Panc1 (cell line): ENCODE measurements at regions of chr7 and their contacts with region 1.

Region 1: GRCh38 chr7:150988230-150989226 is 2.3 kb upstream of the NOS3 start:
- DNase-seq: no peak
- ATAC-seq: peak; percentile 58
- H3K4me3 ChIP-seq: no peak overlapping the region
- H3K27ac ChIP-seq: no peak overlapping the region
- H3K4me1 ChIP-seq: no peaks in the 10 kb centered on the region
- H3K27me3 ChIP-seq: no peaks in the 10 kb centered on the region
- CTCF ChIP-seq: peak; percentile 90

Region 2: GRCh38 chr7:150778738-150779301 is 209.7 kb before region 1 on chr7:
- CTCF ChIA-PET with region 1: no interaction called
- POLR2A ChIA-PET with region 1: no interaction called
- in situ Hi-C with region 1: no loop called
- intact Hi-C with region 1: loop called (anchors 5 kb)
- DNase-seq: peak; percentile 55
- ATAC-seq: peak; percentile 99
- H3K4me3 ChIP-seq: no peak overlapping the region
- H3K27ac ChIP-seq: no peak overlapping the region
- H3K4me1 ChIP-seq: peaks cover 3% of the 10 kb centered on the region; the same call in 1 of the 2 replicates
- H3K27me3 ChIP-seq: no peaks in the 10 kb centered on the region; the same call in none of the 2 replicates
- CTCF ChIP-seq: peak; percentile 94

Region 3: DNA sequence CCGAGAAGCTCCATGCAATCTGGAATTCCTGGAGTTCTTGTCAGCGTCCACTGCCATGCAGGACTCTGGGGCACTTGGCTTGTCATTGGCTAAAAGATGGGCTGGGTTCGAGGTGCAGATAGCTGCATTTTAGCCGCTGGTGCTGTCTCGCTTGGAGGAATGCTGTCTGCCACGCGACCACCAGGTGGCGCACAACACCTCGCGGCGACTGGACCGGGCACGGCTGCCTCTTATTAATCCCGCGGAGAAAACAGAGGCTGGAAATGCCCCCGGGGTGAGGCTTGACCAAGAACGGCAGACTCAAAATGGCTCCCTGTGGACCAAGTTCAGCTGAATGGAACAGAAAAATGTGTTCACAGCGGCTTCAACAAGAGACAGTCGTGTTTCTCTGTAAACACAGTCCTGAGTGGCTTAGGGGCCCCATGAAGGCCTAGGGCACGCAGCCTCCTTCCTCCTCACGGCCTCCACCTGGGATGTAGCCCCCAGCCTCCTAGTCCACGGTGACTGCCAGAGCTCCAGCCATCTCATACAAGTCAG is 90.0 kb before region 1 on chr7:
- CTCF ChIA-PET with region 1: interaction called, 3 read pairs
- POLR2A ChIA-PET with region 1: no interaction called
- in situ Hi-C with region 1: no loop called
- intact Hi-C with region 1: loop called (anchors 2 kb)
- DNase-seq: peak; percentile 39
- ATAC-seq: peak; percentile 90
- H3K4me3 ChIP-seq: no peak overlapping the region
- H3K27ac ChIP-seq: no peak overlapping the region
- H3K4me1 ChIP-seq: peaks cover 8% of the 10 kb centered on the region; the same call in 1 of the 2 replicates
- H3K27me3 ChIP-seq: no peaks in the 10 kb centered on the region
- CTCF ChIP-seq: peak; percentile 97

Region 4: GRCh38 chr7:150962553-150963399 is 25.8 kb before region 1 on chr7:
- CTCF ChIA-PET with region 1: interaction called, 11 read pairs
- POLR2A ChIA-PET with region 1: no interaction called
- in situ Hi-C with region 1: no loop called
- intact Hi-C with region 1: no loop called
- DNase-seq: no peak
- ATAC-seq: peak; percentile 92
- H3K4me3 ChIP-seq: no peak overlapping the region
- H3K27ac ChIP-seq: no peak overlapping the region
- H3K4me1 ChIP-seq: peaks cover 3% of the 10 kb centered on the region
- H3K27me3 ChIP-seq: no peaks in the 10 kb centered on the region
- CTCF ChIP-seq: peak; percentile 98

Region 5: DNA sequence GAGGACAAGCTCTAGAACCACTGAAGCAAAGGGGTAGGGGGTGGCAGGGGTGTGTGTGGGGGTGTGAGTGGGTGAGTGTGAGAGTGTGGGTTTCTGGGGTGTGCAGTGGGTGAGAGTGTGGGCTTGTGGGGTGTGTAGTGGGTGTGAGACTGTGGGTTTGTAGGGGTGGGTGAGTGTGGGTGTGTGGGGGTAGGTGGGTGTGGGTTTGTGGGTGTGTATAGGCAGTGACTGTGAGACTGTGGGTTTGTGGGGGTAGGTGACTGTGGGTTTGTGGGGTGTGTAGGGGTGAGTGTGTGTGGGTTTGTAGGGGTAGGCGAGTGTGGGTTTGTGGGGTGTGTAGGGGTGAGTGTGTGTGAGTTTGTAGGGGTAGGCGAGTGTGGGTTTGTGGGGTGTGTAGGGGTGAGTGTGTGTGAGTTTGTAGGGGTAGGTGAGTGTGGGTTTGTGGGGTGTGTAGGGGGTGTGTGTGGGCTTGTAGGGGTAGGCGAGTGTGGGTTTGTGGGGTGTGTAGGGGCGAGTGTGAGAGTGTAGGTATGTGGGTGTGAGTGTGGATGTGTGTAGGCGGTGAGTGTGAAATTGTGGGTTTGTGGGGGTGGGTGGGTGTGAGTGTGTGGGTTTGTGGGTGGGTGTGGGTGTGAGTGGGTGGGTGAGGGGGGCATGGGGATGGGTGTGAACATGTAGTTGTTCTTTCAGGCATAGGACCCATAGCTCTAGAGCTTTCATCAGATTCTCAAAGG is 11.1 kb after region 1 on chr7:
- CTCF ChIA-PET with region 1: interaction called, 11 read pairs
- POLR2A ChIA-PET with region 1: no interaction called
- in situ Hi-C with region 1: no loop called
- intact Hi-C with region 1: no loop called
- DNase-seq: no peak
- ATAC-seq: no peak
- H3K4me3 ChIP-seq: no peak overlapping the region
- H3K27ac ChIP-seq: no peak overlapping the region
- H3K4me1 ChIP-seq: no peaks in the 10 kb centered on the region
- H3K27me3 ChIP-seq: no peaks in the 10 kb centered on the region
- CTCF ChIP-seq: no peak

Region 6: DNA sequence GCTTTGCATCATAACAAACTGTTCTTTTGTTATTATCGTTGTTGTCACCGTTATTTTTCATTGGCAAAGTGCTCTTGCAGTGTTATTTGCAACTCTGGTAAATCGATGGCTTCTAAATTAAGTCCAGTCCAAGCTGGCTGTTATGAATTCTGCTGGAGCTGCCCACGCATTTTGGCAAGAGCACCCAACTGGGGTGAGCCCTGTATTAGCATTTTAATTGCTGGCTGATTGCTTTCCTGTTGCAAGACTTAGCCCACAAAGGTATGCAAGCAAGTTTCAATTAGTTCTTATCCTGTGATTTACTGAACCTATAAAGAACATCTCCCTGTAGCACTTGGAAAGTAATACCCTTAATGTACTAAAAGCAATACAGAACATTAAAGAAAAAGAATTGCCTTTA is 1997.8 kb after region 1 on chr7:
- CTCF ChIA-PET with region 1: no interaction called
- POLR2A ChIA-PET with region 1: no interaction called
- in situ Hi-C with region 1: no loop called
- intact Hi-C with region 1: no loop called
- DNase-seq: no peak
- ATAC-seq: no peak
- H3K4me3 ChIP-seq: no peak overlapping the region
- H3K27ac ChIP-seq: no peak overlapping the region
- H3K4me1 ChIP-seq: no peaks in the 10 kb centered on the region
- H3K27me3 ChIP-seq: no peaks in the 10 kb centered on the region
- CTCF ChIP-seq: no peak